BJ (cell line): ENCODE measurements at regions of chr9 and their contacts with region 1.

Region 1: DNA sequence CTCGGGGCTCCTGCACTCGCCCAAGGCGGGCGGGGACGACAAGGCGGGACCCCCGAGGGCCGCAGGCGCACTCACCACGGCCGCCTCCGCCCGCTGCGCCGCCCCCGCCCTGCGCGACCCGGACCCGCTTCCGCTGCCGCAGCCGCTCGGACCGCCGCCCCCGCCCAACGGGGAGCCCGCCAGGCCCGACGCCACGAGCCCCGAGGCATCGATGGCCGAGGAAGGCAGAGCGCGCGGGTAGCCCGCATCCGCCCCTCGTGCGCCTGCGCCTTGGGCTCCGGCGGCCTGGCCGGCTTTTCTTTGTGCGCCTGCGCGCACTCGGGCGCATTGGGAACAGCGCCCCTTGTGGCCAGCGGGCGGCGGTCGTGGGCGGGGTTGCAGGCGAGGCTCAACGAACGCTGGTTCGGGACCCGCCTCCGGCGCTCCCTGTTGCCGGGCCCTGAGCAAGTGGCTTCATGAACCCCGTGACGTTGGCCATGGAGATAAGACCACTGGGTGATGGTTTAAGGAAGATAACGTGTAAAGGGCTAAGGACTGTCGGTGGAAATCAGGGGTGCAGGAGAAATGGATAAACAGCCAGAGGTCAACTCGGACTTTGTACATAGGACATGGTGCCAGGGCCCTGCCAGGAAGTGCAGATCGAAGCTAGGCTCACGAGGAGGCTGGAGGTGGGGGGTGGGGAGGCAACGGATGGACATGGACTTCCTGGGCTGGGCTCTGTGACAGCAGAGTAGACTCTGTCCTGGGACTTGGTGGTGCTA is at the starts of genes C8G and FBXW5:
- DNase-seq: peak; percentile 25
- H3K4me3 ChIP-seq: peak within 1 kb of the TSS; percentile 96
- H3K27me3 ChIP-seq: no peaks in the 10 kb centered on the region
- CTCF ChIP-seq: peak; percentile 93
- polyA plus RNA-seq, gene C8G: 0.48 and 0.60 TPM in 2 replicates
- polyA plus RNA-seq, gene FBXW5: 46.9 and 71.9 TPM in 2 replicates

Region 2: DNA sequence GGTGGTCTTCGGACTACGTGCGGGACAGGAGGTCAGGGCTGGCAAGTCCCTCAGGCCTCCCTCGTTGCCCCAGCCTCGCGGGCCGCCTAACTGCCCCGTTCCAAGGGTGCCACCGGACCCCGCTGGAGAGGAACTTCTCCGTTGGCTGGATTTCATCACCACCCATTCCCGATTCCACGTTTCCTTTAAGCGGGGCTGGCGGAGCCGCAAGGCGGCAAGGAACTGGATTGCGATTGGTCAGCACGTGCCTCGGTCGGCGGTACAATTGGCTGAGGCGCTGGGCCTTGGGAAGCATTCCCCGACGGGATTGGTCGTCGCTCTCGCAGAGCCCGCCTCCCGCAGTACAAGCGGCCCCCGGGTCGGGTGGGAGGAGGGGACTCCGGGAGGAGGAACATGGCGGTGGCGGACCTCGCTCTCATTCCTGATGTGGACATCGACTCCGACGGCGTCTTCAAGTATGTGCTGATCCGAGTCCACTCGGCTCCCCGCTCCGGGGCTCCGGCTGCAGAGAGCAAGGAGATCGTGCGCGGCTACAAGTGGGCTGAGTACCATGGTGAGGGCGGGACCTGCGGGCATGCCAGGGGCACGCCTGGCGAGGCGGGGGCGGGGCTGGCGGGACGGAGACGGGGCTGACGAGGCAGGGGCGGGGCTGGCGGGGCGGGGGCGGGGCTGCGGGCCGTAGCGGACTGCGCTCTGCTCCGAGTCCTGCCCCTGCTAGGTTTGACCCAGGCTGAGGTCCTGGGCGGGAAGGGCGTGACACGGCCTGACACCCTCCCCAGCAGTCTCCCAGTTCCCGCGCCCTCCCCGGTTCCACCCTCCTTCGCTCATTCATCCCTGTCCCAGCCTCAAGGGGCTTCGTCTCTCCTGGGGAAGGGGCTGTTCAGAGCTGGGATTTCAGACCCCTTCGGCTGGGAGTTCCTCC is 95.4 kb before region 1 on chr9 and contains the start of gene PHPT1:
- CTCF ChIA-PET with region 1: interaction called, 7 read pairs
- POLR2A ChIA-PET with region 1: interaction called, 10 read pairs
- DNase-seq: peak; percentile 94
- H3K4me3 ChIP-seq: peak within 1 kb of the TSS; percentile 84
- H3K27me3 ChIP-seq: 0 out of 2 replicates have a peak, but pooled peaks cover 6% of the 10 kb centered on the region
- CTCF ChIP-seq: no peak
- polyA plus RNA-seq, gene PHPT1: 116 and 233 TPM in 2 replicates

Region 3: DNA sequence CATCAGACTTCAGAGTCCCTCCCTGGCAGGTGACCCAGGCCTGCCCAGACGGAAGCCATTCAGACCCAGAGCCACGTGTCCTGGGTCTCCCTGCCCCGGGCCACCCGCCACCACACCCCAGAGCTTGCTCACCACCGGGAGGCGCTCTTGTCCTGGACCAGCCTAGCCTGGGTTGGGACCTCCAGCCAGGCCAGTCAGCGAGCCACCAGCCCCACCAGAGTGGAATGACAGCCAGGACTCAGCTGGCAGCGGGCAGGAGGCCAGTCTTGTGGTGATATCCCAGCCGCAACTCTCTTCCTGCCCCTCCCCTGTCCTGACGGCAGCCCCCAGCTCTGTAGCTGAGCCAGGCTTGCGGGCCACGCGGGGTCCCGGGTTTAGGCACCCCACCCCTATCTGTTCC is 30.9 kb after region 1 on chr9:
- CTCF ChIA-PET with region 1: interaction called, 11 read pairs
- POLR2A ChIA-PET with region 1: no interaction called
- DNase-seq: no peak
- H3K4me3 ChIP-seq: no peak overlapping the region
- H3K27me3 ChIP-seq: no peaks in the 10 kb centered on the region
- CTCF ChIP-seq: 0 out of 2 replicates have a peak, but pooled peaks have one; percentile 13

Region 4: DNA sequence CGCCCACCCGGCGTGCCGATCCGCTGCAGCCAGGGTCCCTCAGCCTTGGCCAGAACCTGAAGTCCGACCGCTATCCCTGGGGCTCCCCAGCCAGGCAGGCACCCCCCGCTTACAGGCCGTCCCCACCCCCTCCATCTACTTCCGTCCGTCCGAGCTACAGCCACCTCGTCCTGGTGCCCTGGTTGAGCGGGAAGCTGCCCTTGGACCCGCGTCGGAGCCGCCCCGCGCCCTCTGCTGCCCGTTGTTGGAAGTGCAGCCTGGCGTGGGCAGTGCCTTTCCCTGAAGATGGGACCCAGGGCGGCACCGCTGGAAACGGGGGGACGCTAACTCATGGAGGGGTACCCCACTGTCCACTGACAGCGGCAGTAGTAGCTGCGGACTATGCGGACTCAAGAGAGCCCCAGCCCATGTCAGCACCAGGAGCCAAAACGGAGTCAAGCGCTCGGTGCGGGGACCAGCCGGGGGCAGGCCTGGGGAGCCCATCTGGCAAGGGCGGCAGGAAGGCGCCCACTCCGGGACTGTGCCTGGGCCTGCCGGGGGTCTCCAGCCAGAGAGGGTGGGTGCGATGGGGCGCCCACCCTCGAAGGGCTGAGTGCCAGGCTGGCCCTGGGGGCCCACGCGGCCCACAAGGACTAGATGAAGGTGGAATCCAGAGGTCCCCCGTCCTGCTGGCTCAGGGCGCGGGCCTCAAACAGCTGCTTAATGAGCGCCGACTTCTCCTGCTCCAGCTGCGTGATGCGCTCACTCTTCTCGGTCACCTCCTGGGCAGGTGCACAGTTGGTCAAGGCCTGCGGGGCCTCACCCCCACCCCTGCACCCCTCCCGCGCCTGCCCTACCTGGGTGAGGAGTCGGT is 119.6 kb after region 1 on chr9:
- CTCF ChIA-PET with region 1: interaction called, 15 read pairs
- POLR2A ChIA-PET with region 1: no interaction called
- DNase-seq: no peak
- H3K4me3 ChIP-seq: no peak overlapping the region
- H3K27me3 ChIP-seq: no peaks in the 10 kb centered on the region
- CTCF ChIP-seq: peak; percentile 96